MCF 10A (cell line): ENCODE measurements at regions of chr19 and their contacts with region 1.

Region 1: GRCh38 chr19:36850559-36851442 is at the start of gene ZNF345:
- DNase-seq: peak; percentile 91
- H3K4me3 Mint-ChIP-seq: no peak within 1 kb of the TSS
- H3K27ac Mint-ChIP-seq: no peak within 1 kb of the TSS
- H3K4me1 Mint-ChIP-seq: no peaks in the 10 kb centered on the region
- H3K27me3 Mint-ChIP-seq: no peaks in the 10 kb centered on the region
- CTCF ChIP-seq: no peak
- total RNA-seq, gene ZNF345: 1.1 and 2.0 TPM in 2 replicates

Region 2: DNA sequence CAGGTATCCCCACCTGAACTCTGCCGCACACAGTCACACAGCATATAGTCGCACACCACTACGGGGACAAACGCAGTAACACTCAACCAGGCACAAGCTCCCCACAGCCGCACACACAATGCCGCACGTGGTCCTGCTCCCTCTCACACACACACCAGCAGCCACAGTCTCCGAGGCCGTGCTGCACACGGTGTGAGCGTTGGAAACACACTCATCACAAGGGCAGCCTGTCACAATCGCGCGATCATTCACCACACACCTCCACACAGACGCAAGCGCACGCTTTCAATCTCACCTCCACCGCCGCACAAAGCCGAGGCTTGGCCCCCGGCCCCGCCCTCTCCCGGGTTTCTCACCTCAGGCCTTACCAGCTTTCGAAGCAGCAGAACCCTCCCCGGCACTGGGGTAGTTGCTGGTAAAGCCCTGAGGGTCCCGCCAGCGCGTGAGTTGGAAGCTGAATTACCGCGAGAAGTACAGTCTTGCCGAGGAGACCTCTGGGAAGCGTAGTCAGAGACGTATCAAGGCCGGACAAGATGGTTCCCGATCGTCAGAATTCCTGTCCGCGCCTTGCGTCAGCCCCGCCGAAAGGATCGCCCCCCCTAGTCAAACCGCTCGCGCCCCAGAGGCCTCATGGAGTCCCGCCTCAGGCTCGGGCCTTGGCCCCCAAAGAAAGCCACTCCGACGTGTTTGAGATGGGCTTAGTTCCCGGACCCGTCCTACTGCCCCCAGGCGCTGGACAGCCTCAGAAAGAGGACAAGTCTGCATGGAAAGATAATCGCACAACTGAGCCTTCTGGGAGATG is 361.5 kb before region 1 on chr19 and contains the start of gene ZNF566:
- CTCF ChIA-PET with region 1: no interaction called
- POLR2A ChIA-PET with region 1: interaction called, 10 read pairs
- intact Hi-C with region 1: no loop called
- DNase-seq: peak; percentile 96
- H3K4me3 Mint-ChIP-seq: peak within 1 kb of the TSS; percentile 98
- H3K27ac Mint-ChIP-seq: peak within 1 kb of the TSS; percentile 99
- H3K4me1 Mint-ChIP-seq: peaks cover 6% of the 10 kb centered on the region
- H3K27me3 Mint-ChIP-seq: no peaks in the 10 kb centered on the region
- CTCF ChIP-seq: no peak
- total RNA-seq, gene ZNF566: 3.9 and 6.6 TPM in 2 replicates

Region 3: GRCh38 chr19:36573020-36573885 is 277.5 kb before region 1 on chr19 and contains the start of gene ZNF529:
- CTCF ChIA-PET with region 1: no interaction called
- POLR2A ChIA-PET with region 1: interaction called, 13 read pairs
- intact Hi-C with region 1: no loop called
- DNase-seq: peak; percentile 93
- H3K4me3 Mint-ChIP-seq: peak within 1 kb of the TSS; percentile 93
- H3K27ac Mint-ChIP-seq: peak within 1 kb of the TSS; percentile 99
- H3K4me1 Mint-ChIP-seq: peaks cover 26% of the 10 kb centered on the region
- H3K27me3 Mint-ChIP-seq: no peaks in the 10 kb centered on the region
- CTCF ChIP-seq: no peak
- total RNA-seq, gene ZNF529: 11.4 and 12.8 TPM in 2 replicates

Region 4: DNA sequence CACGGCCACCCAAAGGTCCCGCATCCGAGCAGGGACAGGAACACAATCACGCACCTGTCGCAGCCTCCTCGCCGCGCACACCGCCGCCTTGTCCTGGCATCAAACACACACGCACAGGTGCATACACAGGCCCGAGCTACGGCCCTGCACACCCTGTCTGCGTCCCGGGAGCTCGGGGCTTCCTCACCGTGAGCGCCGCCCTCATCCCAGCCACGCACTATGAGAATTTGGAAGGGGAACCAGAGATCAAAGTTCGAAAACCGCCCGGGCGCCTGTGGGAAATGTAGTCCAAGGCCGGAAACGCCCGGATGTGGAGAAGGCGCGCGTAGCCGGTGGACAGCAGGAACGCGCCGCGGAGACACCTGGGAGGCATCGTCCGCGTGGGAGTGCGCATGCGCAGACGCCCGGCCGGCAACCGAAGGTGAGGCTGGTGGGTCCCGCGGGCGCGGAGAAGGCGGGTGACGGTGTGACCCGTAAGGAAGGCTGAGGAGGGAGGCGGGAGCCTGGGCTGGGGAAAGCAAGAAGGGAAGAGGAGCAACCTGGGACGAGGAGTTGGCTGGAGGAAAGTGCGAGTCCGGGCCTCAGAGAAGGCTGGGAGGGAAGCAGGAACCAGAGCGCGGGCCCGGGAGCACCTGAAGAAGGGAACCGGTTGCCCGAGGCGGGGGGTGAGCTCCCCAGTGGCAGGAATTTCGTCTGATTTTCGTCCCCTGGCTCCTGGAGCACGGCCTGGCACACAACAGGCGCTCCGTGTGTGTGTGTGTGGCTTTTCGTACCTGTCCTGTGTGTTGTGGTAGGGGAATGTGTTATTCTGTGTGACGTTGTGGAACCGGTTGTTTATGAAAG is 163.4 kb before region 1 on chr19 and contains the start of gene ZNF567:
- CTCF ChIA-PET with region 1: no interaction called
- POLR2A ChIA-PET with region 1: interaction called, 19 read pairs
- intact Hi-C with region 1: loop called (anchors 2 kb)
- DNase-seq: peak; percentile 99
- H3K4me3 Mint-ChIP-seq: peak within 1 kb of the TSS; percentile 100
- H3K27ac Mint-ChIP-seq: peak within 1 kb of the TSS; percentile 98
- H3K4me1 Mint-ChIP-seq: peaks cover 13% of the 10 kb centered on the region
- H3K27me3 Mint-ChIP-seq: no peaks in the 10 kb centered on the region
- CTCF ChIP-seq: no peak
- total RNA-seq, gene ZNF567: 6.1 and 6.6 TPM in 2 replicates

Region 5: DNA sequence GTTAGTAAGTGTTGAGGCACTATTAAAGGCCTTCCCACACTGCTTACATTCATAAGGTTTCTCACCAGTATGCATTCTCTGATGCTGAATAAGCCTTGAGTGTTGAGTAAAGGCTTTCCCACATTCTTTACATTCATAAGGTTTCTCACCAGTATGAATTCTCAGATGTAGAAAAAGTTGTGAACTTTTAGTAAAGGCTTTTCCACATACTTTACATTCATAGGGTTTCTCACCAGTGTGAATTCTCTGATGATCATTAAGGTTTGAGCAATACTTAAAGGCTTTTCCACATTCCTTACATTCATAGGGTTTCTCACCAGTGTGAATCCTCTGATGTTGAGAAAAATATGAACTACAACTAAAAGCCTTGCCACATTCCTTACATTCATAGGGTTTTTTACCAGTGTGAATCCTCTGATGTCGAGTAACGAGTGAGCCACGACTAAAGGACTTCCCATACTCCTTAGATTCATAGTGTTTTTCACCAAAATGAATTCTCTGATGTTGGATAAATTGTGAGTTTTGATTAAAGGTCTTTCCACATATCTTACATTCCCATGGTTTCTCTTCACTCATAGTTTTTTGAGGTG is 41.1 kb after region 1 on chr19:
- CTCF ChIA-PET with region 1: no interaction called
- POLR2A ChIA-PET with region 1: no interaction called
- intact Hi-C with region 1: no loop called
- DNase-seq: no peak
- H3K4me3 Mint-ChIP-seq: no peak overlapping the region
- H3K27ac Mint-ChIP-seq: no peak overlapping the region
- H3K4me1 Mint-ChIP-seq: no peaks in the 10 kb centered on the region
- H3K27me3 Mint-ChIP-seq: no peaks in the 10 kb centered on the region
- CTCF ChIP-seq: no peak

Region 6: DNA sequence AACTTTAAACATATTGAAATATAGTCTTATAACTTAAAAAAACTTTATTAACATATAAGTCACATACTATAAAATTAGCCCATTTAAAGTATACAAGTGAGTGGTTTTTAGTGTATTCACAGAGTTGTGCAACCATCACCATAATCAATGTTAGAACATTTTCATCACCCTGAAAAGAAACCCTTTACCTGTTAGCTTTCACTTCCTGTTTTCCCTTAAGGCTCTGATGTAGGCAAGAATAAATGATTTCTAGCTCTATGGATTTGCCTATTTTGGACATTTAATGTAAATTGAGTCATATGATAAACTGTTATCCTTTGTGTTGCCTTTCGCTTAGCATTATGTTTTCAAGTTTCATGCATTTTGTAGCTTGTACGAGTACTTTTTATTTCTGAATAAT is 80.9 kb after region 1 on chr19:
- CTCF ChIA-PET with region 1: no interaction called
- POLR2A ChIA-PET with region 1: no interaction called
- intact Hi-C with region 1: no loop called
- DNase-seq: no peak
- H3K4me3 Mint-ChIP-seq: no peak overlapping the region
- H3K27ac Mint-ChIP-seq: no peak overlapping the region
- H3K4me1 Mint-ChIP-seq: no peaks in the 10 kb centered on the region
- H3K27me3 Mint-ChIP-seq: no peaks in the 10 kb centered on the region
- CTCF ChIP-seq: no peak

Region 7: DNA sequence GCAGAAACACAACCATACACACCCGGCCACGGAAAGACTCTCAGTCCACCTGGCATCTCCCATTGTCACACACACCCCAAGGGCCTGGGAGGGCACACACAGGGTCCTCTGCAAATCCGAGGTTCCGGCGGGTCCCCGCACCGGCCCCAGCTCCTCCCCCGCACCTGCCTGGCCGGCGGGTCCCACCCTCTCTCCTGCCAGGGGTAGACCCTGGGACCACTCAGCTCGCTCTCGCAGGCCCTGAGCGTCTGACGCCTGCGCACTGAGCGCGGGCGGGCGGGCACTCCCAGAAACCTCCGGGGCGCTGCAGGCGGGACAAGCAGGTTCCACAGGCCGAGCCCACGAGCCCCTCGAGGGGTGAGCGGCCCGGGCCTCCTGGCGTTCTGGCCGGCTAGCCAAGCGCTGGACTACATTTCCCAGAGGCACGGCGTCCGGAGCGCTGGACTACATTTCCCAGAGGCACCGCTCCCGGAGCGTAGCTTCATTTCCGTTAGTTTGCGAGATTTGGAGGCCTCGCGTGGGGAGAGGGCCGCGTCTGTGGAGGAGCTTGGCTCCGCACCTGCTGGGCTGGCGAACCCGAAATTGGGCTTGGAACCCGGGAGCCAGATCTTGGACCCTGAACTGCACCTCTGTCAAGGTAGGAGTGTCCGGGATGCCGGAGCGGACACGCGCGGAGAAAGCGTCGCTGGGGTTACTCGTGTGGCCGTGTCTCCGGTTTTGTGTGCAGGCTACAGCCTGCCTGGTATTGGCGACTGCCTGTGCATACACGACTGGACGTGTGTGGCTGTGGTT is 227.3 kb after region 1 on chr19 and contains the start of gene ZNF420:
- CTCF ChIA-PET with region 1: no interaction called
- POLR2A ChIA-PET with region 1: interaction called, 11 read pairs
- intact Hi-C with region 1: no loop called
- DNase-seq: peak; percentile 93
- H3K4me3 Mint-ChIP-seq: peak within 1 kb of the TSS; percentile 95
- H3K27ac Mint-ChIP-seq: peak within 1 kb of the TSS; percentile 93
- H3K4me1 Mint-ChIP-seq: peaks cover 12% of the 10 kb centered on the region
- H3K27me3 Mint-ChIP-seq: no peaks in the 10 kb centered on the region
- CTCF ChIP-seq: no peak
- total RNA-seq, gene ZNF420: 9.0 and 11.0 TPM in 2 replicates

Region 8: DNA sequence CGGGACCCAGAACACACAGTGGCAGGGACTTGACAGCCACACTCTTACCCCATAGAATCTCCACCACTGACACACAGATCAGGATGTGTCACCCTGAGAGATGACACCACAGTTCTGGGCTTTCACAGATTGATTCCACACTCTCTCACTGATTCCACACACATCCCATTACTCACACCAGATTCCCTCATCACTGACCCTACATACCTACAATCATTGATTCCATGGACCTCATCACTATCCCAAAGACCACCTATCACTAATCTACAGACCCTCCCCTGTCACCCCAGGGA is 462.5 kb after region 1 on chr19:
- CTCF ChIA-PET with region 1: no interaction called
- POLR2A ChIA-PET with region 1: interaction called, 10 read pairs
- intact Hi-C with region 1: no loop called
- DNase-seq: no peak
- H3K4me3 Mint-ChIP-seq: no peak overlapping the region
- H3K27ac Mint-ChIP-seq: no peak overlapping the region
- H3K4me1 Mint-ChIP-seq: no peaks in the 10 kb centered on the region
- H3K27me3 Mint-ChIP-seq: no peaks in the 10 kb centered on the region
- CTCF ChIP-seq: no peak